ENCODE measurements at regions of chr5 and their contacts with region 1.

Region 1: GRCh38 chr5:134586866-134587524 is 45.6 kb downstream of the SAR1B start:
- ATAC-seq: peak; percentile 63 to 97 (median 84)
- H3K4me3 ChIP-seq: no peak overlapping the region
- H3K27ac ChIP-seq: no peak overlapping the region
- H3K4me1 ChIP-seq: no peaks in the 10 kb centered on the region

Region 2: DNA sequence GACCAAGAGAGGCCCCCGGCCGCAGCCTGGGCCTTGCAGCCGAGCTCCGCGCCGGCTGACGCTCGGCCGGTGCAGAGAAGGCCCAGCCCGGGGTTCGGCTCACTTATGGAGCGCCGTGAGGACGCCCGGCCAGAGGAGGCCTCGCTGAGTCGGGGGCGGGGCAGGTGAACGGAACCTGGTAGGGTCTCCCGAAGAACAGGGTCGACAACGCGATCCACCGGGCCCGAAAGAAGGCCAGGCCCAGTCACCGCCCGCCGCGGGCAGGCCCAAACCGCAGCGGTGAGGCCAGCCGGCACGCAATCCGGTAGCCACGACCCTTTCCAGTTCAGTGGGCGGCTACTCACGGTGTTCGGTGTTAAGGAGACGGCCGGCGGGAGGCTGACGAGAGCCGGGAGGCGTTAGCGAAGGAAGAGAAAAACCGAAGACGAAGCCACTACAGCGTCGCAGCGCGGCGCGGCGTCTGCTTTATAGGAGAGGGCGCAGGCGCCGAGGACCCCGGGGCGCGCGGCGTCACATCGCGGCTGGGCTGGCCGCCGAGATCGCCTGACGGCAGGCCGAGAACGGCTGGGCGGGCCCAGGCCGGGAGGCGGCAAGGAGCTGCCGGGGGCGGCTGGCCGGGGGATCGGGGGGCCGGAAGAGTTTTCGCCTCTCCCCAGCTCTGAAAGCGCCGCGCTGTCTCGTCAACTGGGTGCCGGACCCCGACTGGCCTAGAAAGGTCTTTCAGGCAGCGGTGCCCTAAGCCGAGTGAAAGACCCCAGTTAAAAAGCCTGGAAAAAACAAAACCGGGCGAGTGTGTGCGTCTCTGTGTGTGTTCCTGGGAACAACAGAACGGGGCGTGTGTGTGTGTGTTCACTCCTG is 410.3 kb before region 1 on chr5 and contains the start of gene SKP1:
- in situ Hi-C with region 1: loop called in 2 of 9 experiments (anchors 25 kb)
- ATAC-seq: peak; percentile 68 to 88 (median 81)
- H3K4me3 ChIP-seq: peak within 1 kb of the TSS; percentile 74 to 99 (median 95)
- H3K27ac ChIP-seq: peak within 1 kb of the TSS; percentile 100
- H3K4me1 ChIP-seq: peaks cover 5 to 17% of the 10 kb centered on the region in 2 donors
- total RNA-seq, gene SKP1: 368 to 550 (median 471) TPM

Region 3: GRCh38 chr5:134304311-134304710 is 282.7 kb before region 1 on chr5:
- in situ Hi-C with region 1: loop called in 3 of 9 experiments (anchors 10 to 25 kb)
- ATAC-seq: no peak
- H3K4me3 ChIP-seq: no peak overlapping the region
- H3K27ac ChIP-seq: no peak overlapping the region
- H3K4me1 ChIP-seq: no peaks in the 10 kb centered on the region

Region 4: GRCh38 chr5:134394932-134395331 is 192.1 kb before region 1 on chr5:
- in situ Hi-C with region 1: loop called in 1 of 9 experiments (anchors 25 kb)
- ATAC-seq: no peak
- H3K4me3 ChIP-seq: no peak overlapping the region
- H3K27ac ChIP-seq: no peak overlapping the region
- H3K4me1 ChIP-seq: no peaks in the 10 kb centered on the region

Region 5: GRCh38 chr5:134436523-134437339 is 150.3 kb before region 1 on chr5:
- in situ Hi-C with region 1: no loop called
- ATAC-seq: peak; percentile 34 to 97 (median 94)
- H3K4me3 ChIP-seq: peak overlapping the region in 1 of 5 donors; percentile 6
- H3K27ac ChIP-seq: peak overlapping the region; percentile 35 to 69
- H3K4me1 ChIP-seq: peaks cover 8 to 10% of the 10 kb centered on the region in 2 donors

Region 6: GRCh38 chr5:134503088-134503946 is 83.7 kb before region 1 on chr5:
- in situ Hi-C with region 1: no loop called
- ATAC-seq: peak in 7 of 8 experiments; percentile 31 to 74 (median 57)
- H3K4me3 ChIP-seq: no peak overlapping the region
- H3K27ac ChIP-seq: no peak overlapping the region
- H3K4me1 ChIP-seq: peaks cover 0 to 8% of the 10 kb centered on the region in 2 donors